Tibial artery (tissue), 4 donors: ENCODE measurements at regions of chr15 and their contacts with region 1.

Region 1: DNA sequence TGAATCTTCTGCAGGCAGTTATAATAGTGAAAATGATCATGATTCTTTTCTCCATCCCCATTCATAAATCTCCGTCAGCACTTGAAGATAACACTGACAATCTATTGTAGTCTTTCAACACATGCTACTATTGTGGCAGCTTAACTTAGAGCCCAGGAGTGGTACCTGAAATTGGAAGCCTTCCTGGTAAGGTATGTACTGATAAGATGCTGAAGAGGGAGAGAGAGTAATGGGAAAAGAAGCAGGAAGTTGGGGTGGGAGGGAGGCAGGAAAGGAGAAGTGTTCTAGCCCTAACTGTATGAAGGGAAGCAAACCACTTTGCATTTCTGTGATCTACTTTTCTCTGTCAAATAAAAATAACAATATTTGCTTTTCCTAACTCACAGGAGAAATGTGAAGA is 197.4 kb upstream of the RORA start:
- DNase-seq: no peak
- H3K4me3 ChIP-seq: no peak overlapping the region
- H3K27ac ChIP-seq: no peak overlapping the region
- H3K4me1 ChIP-seq: no peaks in the 10 kb centered on the region
- H3K27me3 ChIP-seq: no peaks in the 10 kb centered on the region
- CTCF ChIP-seq: no peak

Region 2: DNA sequence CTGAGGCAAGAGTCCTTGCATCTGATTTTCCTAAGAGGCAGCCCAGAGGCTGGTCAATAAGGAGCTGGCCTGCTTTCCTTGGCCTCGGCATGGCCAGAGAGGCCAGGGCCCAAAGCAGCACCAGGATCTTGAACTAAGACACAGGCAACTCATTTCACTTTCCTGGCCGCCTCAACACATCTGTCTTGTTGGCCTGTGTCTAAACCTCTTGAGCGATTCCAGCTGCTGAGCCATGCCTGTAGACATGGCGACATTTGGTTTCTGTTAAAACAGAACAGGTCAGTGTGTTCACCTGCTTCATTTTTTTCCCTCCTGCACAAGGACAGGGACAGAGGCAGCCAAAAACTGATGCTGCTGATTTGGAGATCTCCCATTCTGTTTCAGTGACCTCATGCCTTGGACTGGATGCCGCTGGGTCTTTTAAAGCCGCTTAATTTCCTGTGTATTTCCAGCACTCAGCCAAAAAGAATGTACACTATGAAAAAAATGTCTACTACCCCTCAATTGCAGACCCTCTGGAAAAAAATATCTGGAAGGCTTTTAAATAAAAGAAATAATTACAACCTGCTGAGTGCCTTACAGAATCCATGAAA is 680.9 kb before region 1 on chr15:
- intact Hi-C with region 1: loop called (anchors 5 kb)
- DNase-seq: peak; percentile 71 to 79
- H3K4me3 ChIP-seq: no peak overlapping the region
- H3K27ac ChIP-seq: no peak overlapping the region
- H3K4me1 ChIP-seq: no peaks in the 10 kb centered on the region
- H3K27me3 ChIP-seq: no peaks in the 10 kb centered on the region
- CTCF ChIP-seq: no peak

Region 3: GRCh38 chr15:61824291-61824690 is 397.8 kb after region 1 on chr15:
- intact Hi-C with region 1: no loop called
- DNase-seq: no peak
- H3K4me3 ChIP-seq: no peak overlapping the region
- H3K27ac ChIP-seq: no peak overlapping the region
- H3K4me1 ChIP-seq: no peaks in the 10 kb centered on the region
- H3K27me3 ChIP-seq: peaks cover 0 to 3% of the 10 kb centered on the region in 2 donors
- CTCF ChIP-seq: no peak